ENCODE measurements at regions of chrX and their contacts with region 1.

Region 1: DNA sequence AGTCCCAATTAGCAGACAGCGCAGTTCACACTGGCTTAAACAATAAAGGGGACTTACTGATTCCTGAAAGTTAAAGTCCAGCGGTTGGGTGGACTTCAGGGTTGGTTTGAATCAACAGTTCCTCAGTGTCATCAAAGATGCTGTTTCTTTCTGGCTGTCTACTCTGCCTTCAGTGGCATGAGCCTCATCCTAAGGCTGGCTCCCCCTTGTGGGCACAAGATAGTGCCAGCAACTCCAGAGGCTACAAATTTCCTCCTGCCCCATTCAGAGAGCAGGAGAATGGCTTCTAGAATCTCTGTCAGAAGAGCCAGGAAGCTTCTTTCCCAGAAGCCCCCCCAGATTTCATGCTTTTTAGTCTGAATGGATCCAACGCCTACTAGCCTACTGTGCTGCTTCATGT is 82.4 kb upstream of the MTM1 start:
- DNase-seq: no peak

Region 2: DNA sequence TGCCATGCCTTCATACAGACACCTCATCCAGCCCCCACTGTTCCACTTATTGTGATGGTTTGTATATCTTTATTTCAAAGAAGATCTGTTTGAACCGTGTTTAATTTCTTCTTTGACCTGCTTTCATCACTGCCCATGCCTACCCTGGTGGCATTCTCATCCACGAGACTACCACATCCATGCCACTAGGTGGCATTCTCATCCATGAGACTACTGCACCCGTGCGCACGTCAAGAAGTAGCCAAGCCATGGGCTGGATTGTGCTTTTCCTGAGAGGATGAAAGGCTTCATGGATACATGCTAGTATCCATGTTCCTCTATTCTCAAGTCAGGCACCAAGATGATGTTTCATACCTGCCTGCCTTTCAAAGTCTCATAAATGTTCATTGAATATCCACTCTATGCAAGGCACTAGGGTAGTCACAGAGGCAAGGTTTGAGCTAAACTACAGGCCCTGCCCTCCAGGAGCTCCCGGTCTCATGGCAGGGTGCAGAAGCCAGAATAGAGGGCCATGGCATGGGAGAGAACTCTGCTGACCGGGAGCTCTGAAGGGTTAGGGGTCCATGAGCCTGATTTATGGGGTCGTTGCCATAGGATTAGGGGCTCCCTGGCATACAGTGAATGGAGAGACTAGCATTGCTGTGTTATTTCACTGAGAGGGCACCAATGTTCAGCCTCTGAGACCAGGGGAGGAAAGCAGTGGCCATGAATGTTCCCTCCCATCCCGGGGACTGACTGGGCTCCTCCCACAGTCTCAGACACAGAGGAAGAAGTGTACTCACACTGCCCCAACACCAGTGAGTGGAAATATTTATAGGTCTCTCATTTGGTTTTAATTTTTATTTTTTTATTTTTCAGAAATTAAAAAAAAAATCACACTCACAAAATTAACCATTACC is 522.9 kb before region 1 on chrX:
- intact Hi-C with region 1: loop called in 1 of 2 experiments (anchors 5 kb)
- DNase-seq: no peak

Region 3: DNA sequence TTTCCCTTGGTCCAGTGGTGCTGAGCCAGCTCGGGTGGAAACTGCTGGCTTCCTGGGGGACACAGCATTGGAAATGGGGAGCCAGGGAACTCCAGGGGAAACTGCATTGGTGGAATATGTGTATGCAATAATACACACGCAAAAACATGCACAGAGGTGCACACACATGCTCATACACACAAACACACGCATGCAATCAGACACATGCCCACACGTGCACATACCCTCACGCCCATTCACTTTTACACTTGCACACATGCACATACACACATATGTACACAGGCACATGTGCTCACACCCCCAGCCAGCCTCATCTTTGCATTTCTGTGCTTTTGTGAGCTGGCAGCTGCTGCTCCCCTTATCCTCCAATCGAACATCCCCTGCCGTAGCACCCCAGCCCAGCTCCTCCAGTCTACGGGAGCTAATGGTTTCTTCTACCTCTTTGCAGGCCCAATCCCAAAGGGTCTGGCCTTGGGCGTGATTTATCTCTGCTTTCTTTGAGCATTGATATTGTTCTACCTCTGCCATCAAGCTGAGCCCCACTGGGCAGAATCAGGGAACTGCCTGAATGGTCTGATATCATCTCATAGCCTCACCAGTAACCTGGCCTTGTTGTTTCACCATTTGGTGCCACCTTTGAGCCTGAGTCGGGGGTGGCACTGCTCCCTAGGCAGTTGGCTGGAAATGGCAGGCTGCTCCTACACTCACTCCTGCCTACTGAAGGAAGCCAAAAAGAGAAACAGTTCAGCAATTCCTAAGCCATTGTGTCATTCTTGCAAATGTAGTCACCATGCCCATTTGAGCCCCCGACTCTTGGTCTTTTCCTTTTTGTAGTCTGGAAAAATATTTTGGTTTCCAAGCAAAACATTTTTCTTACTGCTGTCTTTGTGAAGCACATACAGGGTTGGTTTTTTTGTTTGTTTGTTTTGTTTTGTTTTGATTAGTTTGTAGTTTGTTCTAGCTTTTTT is 227.3 kb before region 1 on chrX:
- intact Hi-C with region 1: loop called in 1 of 2 experiments (anchors 10 kb)
- DNase-seq: no peak

Region 4: DNA sequence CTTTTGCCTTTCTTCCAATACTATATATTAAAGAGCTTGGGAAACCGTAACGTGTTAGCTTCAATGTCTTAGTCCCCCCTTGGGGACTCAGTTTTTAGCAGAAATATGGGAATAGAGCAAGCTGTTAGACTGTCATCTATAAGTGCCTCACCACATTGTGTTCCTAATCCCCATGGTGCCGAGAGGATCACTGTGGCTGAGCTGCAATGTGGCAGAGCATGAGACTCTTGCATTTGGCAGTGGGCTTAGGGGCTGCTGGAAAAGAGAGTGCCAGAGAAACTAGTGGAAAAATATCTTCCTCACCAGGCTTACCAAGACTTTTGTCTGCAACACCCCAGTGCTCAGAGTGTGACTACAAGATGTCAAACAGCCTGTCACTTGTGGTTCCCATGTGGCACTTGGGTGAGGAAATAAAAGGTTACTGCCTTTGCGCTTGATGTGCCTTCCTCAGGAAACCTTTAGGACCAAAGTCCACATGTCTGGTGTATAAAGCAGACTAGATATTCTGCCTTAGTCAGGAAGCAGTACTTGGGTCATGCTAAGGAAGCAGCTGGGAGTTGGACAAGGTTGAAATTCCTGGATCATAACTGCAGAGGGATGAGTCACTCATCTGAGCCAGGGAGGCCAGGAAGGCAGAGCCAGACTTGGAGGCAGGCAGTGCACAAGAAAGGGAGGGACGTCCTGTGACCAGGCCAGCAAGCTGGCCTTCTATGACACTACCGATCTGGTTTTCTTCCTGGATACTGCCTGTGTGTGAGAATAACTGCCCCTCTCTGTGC is 1417.0 kb after region 1 on chrX:
- intact Hi-C with region 1: no loop called
- DNase-seq: no peak